Calu3 (cell line): ENCODE measurements at regions of chr2 and their contacts with region 1.

Region 1: DNA sequence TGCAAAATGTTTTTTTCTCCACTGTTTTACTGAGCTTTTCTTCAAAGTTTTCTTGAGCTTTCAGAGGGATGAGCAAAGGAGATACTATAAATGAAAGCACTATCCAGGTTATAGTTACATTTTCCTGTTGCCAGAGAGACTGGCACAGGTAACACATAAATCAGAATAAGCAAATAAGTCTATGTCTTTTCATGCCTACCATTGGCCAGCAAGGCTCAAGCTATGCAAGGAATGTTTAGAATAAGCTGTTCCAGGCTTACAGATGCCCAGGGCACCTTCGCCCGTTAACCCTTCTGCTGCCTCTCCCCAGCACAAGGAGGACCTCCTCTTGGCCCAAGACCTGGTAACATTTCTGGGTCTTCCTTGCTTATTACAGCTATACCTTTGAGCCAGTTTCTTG is 233.7 kb upstream of the MEIS1 start:
- DNase-seq: no peak
- H3K4me3 Mint-ChIP-seq: no peak overlapping the region
- H3K27ac Mint-ChIP-seq: no peak overlapping the region
- H3K4me1 Mint-ChIP-seq: no peaks in the 10 kb centered on the region
- H3K27me3 Mint-ChIP-seq: no peaks in the 10 kb centered on the region
- CTCF ChIP-seq: no peak

Region 2: DNA sequence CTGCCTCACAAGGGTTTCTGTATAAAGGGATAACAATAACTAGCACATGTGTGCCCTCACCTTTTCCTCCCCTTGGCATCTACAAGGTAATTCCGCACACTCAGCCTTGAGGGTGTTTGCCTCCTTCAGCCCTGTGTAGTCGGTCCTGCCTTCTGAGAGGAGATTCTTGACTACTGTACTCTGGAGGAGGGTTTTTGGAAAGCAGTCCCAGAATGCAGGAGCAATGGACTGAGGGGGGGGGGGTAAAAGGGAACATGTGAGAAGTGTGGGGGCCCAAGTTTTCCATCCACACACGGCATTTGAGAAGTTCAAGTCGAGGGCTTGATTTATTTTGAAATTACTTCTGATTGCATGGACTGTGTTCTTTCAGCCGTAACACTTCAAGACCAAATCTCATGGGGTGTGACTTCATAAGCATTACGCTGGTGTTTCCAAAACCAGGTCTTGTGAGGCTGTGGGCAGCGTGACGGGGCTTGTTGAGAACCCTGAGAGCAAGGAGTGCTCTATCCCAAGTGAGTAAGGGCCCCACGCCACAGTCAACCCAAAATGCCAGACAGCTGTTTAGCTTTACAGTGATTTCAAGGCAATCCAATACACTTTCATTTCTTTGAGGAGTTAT is 35.0 kb after region 1 on chr2:
- CTCF ChIA-PET with region 1: interaction called, 13 read pairs
- intact Hi-C with region 1: no loop called
- DNase-seq: no peak
- H3K4me3 Mint-ChIP-seq: no peak overlapping the region
- H3K27ac Mint-ChIP-seq: no peak overlapping the region
- H3K4me1 Mint-ChIP-seq: peaks cover 7% of the 10 kb centered on the region
- H3K27me3 Mint-ChIP-seq: peaks cover 23% of the 10 kb centered on the region
- CTCF ChIP-seq: no peak